T-cell (primary cell): ENCODE measurements at regions of chr17 and their contacts with region 1.

Region 1: DNA sequence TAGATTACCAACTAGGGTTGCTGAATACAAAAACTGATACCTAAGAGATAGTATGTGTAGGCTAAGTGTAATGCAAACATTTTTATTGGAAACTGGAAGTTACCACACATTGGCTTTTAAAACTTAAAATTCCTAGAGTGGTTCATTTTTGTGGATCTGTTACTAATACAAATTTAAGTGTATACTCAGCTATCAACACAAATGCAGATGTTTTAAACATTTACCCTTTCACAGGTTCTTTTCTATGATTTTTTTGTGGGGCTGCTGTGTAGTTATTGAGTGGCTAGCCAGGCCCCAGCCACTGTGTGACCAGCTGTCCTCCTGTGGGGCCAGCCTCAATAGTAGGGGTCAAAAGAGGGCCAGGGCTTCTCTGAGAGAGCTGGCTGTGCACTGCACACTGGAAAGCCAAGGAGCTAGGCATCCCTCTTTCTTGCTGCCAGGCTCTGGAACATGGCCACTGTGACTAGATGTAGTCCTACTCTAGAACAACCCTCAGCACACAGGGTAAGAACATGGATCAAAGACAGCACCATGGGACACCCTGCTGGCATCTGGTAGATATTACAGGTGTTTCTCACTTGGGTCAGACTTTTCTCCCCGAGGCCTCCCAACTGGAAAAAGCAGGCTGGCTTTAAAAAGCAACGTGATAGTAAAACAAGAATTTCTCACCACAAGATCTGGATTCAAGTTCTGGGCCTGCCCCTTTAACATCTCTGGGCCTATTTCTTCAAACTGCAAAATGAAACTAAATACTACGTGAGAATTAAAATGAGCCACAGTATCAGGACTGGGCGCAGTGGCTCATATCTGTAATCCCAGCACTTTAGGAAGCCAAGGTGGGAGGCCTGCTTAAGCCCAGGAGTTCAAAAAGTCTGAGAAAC is 7.3 kb upstream of the VEZF1 start:
- DNase-seq: peak in 34 of 35 experiments; percentile 9 to 77 (median 36)
- ATAC-seq: peak; percentile 79 to 86 (median 84)
- H3K4me3 ChIP-seq: no peak overlapping the region
- H3K4me3 Mint-ChIP-seq: peak overlapping the region in 1 of 3 donors; percentile 6
- H3K27ac ChIP-seq: peak overlapping the region; percentile 45
- H3K27ac Mint-ChIP-seq: peak overlapping the region; percentile 76 to 80
- H3K4me1 ChIP-seq: peaks cover 0 to 19% of the 10 kb centered on the region in 2 experiments
- H3K4me1 Mint-ChIP-seq: peaks cover 51 to 56% (median 55%) of the 10 kb centered on the region in 3 donors
- H3K27me3 ChIP-seq: no peaks in the 10 kb centered on the region
- H3K27me3 Mint-ChIP-seq: no peaks in the 10 kb centered on the region

Region 2: DNA sequence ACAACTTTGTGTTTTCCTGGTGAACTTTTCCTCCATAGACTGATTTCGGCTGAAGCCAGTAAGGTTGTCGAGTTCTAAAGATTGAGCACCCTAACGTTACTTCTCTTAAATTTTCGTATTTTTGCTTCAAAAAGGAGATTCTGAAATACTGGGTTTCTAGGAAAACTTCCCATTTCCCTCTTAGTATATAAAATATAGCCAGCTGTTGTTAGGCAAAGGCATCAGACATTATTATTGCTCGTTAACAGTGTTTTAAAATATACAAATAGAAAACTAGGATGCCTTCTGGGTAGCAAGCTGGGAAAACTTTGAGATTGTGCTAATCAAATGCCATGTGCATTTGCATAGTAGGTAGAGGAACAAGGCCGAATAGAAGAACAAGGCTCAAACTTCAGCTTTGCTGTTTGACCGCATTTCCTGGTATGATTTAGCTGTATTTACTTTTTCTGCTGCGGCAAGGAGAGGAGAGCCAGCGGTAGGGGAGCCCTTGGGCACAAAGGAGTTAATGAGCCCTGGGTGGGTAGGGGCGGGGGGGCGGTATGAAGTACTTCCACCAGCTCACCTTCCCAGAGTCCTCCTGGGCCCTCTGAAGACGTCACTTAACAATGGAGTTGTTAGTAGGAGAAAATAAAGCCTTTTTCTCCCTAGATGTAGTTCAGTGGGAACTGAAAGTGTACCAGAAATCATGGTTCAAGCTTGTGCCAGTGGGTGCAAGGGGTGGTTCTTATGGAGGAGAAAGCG is 587.1 kb before region 1 on chr17:
- CTCF ChIA-PET with region 1: no interaction called
- POLR2A ChIA-PET with region 1: no interaction called
- DNase-seq: peak in 29 of 35 experiments; percentile 1 to 56 (median 19)
- ATAC-seq: peak; percentile 45 to 81 (median 58)
- H3K4me3 ChIP-seq: no peak overlapping the region
- H3K4me3 Mint-ChIP-seq: peak overlapping the region in 2 of 3 donors; percentile 2 to 43
- H3K27ac ChIP-seq: no peak overlapping the region
- H3K27ac Mint-ChIP-seq: peak overlapping the region; percentile 7 to 73
- H3K4me1 ChIP-seq: peaks cover 11 to 19% of the 10 kb centered on the region in 2 experiments
- H3K4me1 Mint-ChIP-seq: peaks cover 46 to 63% (median 53%) of the 10 kb centered on the region in 3 donors
- H3K27me3 ChIP-seq: no peaks in the 10 kb centered on the region
- H3K27me3 Mint-ChIP-seq: no peaks in the 10 kb centered on the region

Region 3: DNA sequence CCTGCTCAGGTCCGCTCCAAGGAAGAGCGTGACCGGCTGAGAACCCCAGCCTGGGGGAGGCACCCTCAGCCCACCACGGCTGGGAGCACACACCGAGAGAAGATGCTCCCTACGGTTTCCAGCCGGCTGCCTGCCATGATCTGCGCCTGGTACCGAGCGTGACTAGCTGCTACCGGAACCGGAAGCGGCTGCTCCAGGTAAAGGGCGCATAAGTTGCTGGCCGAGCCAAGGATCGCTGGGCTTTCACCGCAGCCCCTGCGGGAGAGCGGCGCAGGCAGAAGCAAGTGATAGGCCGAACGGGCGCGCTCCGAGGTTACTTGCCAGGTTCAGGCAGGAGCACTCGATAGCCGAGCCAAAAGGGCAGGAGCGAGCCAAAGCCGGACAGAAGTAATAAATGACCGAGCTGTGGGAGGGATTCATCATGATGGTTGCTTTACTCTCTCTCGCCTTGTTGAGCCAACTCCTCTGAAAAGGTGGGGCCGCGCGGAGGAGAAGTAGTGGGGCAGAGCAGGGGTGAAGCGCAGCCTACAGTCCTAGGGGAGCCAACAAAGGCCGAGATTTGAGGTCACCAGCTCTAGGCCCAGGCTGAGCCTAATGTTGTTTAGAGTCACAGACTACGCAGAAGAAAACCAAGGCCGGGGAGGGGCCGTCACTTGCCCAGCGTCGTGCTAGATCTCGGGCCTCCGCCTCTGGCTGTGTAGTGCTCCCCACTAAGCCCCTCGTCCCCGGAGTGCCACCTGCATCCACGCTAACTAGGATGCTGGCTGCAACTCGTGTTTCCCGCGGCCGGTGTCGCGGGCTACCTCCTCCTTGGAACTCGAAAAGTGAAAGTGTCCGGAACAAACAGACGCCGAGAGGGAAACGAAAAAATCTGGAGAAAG is 145.2 kb before region 1 on chr17 and contains the start of gene MRPS23:
- CTCF ChIA-PET with region 1: interaction called, 3 to 68 read pairs
- POLR2A ChIA-PET with region 1: no interaction called
- DNase-seq: peak; percentile 85 to 99 (median 97)
- ATAC-seq: peak; percentile 91 to 97 (median 94)
- H3K4me3 ChIP-seq: peak within 1 kb of the TSS; percentile 66 to 85
- H3K4me3 Mint-ChIP-seq: peak within 1 kb of the TSS; percentile 95 to 99 (median 99)
- H3K27ac ChIP-seq: peak within 1 kb of the TSS; percentile 92
- H3K27ac Mint-ChIP-seq: peak within 1 kb of the TSS; percentile 99 to 100
- H3K4me1 ChIP-seq: peaks cover 15 to 43% of the 10 kb centered on the region in 2 experiments
- H3K4me1 Mint-ChIP-seq: peaks cover 37 to 49% (median 47%) of the 10 kb centered on the region in 3 donors
- H3K27me3 ChIP-seq: no peaks in the 10 kb centered on the region
- H3K27me3 Mint-ChIP-seq: no peaks in the 10 kb centered on the region
- total RNA-seq, gene MRPS23: 13.3 to 32.3 (median 25.2) TPM

Region 4: DNA sequence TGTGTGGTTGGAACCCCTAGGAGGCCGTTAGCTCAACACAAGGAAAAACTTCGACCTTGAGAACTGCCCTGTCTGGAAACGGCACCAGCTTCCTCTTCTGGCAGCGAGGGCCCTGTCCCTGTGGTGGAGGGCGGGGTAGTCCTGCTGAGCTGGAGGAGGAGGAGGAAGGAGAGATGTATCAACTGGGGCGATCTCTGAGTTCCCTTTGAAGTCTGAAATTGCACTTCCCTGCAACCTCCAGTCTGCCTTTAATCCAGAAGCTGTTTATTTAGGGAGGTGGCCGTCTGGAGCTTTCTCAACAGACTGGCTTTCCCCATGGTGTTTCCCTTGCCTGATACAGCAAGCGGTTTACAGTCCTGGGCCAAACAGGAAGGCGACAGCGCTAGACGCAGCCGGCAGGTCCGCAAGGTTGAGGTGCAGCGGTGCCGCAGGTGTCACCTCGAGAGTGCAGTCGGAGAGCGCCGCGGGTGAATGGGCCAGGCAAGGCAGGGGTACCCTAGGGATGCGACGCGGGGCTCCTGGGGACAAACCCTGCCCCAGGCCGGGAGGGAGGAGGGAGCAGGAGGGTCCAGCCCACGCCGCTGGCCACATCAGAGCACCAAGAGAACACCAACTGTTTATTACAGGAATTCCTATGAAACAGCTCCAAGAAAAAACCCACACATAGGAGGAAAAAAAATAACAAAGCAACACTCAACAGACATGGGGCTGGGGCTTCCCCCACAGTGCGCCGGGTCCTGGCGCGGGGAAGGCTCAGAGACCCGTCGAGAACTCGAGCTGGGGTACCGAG is 134.1 kb before region 1 on chr17:
- CTCF ChIA-PET with region 1: interaction called, 4 to 68 read pairs
- POLR2A ChIA-PET with region 1: no interaction called
- DNase-seq: peak in 24 of 35 experiments; percentile 13 to 57 (median 30)
- ATAC-seq: peak; percentile 72 to 83 (median 81)
- H3K4me3 ChIP-seq: peak overlapping the region; percentile 35 to 80
- H3K4me3 Mint-ChIP-seq: peak overlapping the region; percentile 76 to 87 (median 77)
- H3K27ac ChIP-seq: no peak overlapping the region
- H3K27ac Mint-ChIP-seq: peak overlapping the region in 1 of 2 donors; percentile 39
- H3K4me1 ChIP-seq: peaks cover 8 to 20% of the 10 kb centered on the region in 2 experiments
- H3K4me1 Mint-ChIP-seq: peaks cover 10 to 14% (median 11%) of the 10 kb centered on the region in 3 donors
- H3K27me3 ChIP-seq: peaks cover 0 to 51% of the 10 kb centered on the region in 2 experiments
- H3K27me3 Mint-ChIP-seq: peaks cover 6 to 17% of the 10 kb centered on the region in 2 donors

Region 5: DNA sequence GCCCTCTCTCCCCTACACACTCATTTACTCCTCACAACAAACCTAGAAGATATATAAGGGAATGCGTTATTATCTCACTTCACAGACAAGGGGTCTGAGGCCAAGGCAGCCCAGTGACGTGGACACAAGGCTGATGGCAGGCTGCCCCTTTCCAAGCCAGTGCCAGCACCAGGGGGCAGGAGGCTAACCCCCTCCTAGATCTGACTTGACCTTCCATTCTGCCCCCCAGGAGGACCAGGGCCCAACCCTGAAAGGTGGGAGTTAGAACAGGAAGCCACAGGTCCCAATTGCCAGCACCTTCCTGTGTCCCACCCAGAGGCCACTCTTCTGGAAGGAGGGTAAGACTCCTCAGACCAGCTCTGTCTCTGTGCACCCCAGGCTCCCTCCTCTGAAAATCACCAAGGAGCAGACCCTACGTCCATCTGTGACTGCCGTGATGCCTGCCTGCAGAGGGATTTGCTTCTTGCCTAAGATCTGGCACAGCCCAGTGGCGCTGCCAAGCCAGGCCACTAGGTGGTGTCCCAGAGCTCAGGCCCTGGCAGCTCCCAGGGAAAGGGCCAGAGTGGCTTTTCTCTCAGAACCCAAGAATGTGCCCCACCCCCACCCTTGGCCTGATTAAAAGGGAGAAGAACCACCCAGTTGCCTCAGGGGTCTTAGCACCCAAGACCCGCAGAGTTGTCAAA is 103.0 kb before region 1 on chr17:
- CTCF ChIA-PET with region 1: interaction called, 12 to 15 read pairs
- POLR2A ChIA-PET with region 1: interaction called in 1 of 2 experiments, 6 read pairs
- DNase-seq: peak; percentile 42 to 82 (median 69)
- ATAC-seq: peak; percentile 77 to 90 (median 85)
- H3K4me3 ChIP-seq: no peak overlapping the region
- H3K4me3 Mint-ChIP-seq: no peak overlapping the region
- H3K27ac ChIP-seq: no peak overlapping the region
- H3K27ac Mint-ChIP-seq: no peak overlapping the region
- H3K4me1 ChIP-seq: peaks cover 0 to 11% of the 10 kb centered on the region in 2 experiments
- H3K4me1 Mint-ChIP-seq: peaks cover 3 to 9% (median 6%) of the 10 kb centered on the region in 3 donors
- H3K27me3 ChIP-seq: peaks cover 0 to 33% of the 10 kb centered on the region in 2 experiments
- H3K27me3 Mint-ChIP-seq: peaks cover 0 to 6% of the 10 kb centered on the region in 2 donors

Region 6: GRCh38 chr17:57980522-57980921 is 14.8 kb before region 1 on chr17:
- CTCF ChIA-PET with region 1: interaction called, 4 to 25 read pairs
- POLR2A ChIA-PET with region 1: interaction called, 4 read pairs
- DNase-seq: no peak
- ATAC-seq: no peak
- H3K4me3 ChIP-seq: no peak overlapping the region
- H3K4me3 Mint-ChIP-seq: no peak overlapping the region
- H3K27ac ChIP-seq: no peak overlapping the region
- H3K27ac Mint-ChIP-seq: no peak overlapping the region
- H3K4me1 ChIP-seq: peaks cover 19 to 20% of the 10 kb centered on the region in 2 experiments
- H3K4me1 Mint-ChIP-seq: peaks cover 58 to 62% (median 61%) of the 10 kb centered on the region in 3 donors
- H3K27me3 ChIP-seq: no peaks in the 10 kb centered on the region
- H3K27me3 Mint-ChIP-seq: no peaks in the 10 kb centered on the region

Region 7: DNA sequence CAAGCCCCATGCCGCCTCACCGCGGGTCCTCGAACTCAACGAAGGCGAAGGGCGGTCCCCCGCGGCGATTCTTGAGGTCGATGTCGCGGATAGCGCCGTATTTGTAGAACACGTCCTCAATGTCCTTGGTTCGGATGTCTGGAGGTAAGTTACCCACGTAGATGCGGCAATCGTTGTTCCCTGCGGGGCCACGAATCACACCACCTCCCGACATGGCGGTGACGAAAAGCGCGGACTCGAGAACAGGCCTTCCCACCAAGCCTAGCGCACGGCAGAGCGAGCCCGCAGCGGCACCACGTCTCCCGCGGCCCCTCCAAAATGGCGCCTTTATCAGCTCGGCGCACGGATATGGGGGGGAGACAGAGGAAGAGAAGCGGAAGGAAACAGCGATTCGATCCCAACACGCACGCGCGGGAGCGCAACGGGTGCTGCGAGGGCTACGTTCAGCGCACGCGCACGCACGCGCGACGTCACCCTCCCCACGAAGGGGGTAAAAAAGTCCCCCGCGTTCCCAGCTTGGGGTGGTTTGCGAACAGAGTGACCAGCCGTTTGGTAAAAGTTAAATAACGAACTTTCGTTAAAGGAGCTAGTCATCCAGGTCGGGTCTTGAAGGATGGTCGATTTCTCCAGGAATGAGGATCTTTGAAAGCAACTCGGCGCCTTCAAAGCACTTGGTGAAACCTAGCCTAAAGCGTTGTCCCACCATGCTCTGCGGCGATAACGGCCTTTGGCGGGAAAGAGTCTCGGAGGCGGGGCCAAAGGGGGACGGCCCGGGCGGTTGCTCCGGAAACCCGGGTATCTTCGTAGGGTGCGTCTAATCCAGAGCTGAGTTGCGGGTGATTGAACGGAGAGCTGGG is 11.8 kb after region 1 on chr17 and contains the start of gene SRSF1:
- CTCF ChIA-PET with region 1: interaction called, 6 to 18 read pairs
- POLR2A ChIA-PET with region 1: interaction called, 3 to 8 read pairs
- DNase-seq: peak; percentile 95 to 99 (median 97)
- ATAC-seq: peak; percentile 89 to 92 (median 90)
- H3K4me3 ChIP-seq: peak within 1 kb of the TSS; percentile 96 to 100
- H3K4me3 Mint-ChIP-seq: peak within 1 kb of the TSS; percentile 100
- H3K27ac ChIP-seq: peak within 1 kb of the TSS; percentile 96
- H3K27ac Mint-ChIP-seq: peak within 1 kb of the TSS; percentile 99
- H3K4me1 ChIP-seq: peaks cover 26 to 30% of the 10 kb centered on the region in 2 experiments
- H3K4me1 Mint-ChIP-seq: peaks cover 52 to 61% (median 56%) of the 10 kb centered on the region in 3 donors
- H3K27me3 ChIP-seq: no peaks in the 10 kb centered on the region
- H3K27me3 Mint-ChIP-seq: no peaks in the 10 kb centered on the region
- total RNA-seq, gene SRSF1: 112 to 266 (median 261) TPM